ENCODE measurements at regions of chr1 and their contacts with region 1.

Region 1: DNA sequence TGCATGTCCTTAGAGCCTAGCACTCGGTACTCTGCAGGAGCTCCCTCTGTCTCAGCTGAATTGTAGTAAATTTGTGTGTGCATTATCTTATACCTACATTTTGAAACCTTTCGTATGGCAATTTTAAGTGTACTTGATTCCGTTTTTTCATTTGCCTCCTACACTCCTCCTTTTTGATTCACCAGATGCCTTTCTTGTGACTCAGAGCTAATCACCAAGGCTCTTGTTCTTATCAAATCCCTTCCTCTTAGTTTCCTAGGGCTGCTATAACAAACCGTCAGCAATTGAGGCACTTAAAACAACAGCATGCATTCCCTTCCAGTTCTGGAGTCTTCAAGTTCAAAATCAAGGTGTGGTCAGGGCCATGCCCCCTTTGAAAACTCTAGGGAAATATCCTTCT is 261.0 kb downstream of the ASTN1 start:
- DNase-seq: no peak
- ATAC-seq: peak in 1 of 4 donors; percentile 38
- H3K4me3 ChIP-seq: no peak overlapping the region
- H3K27ac ChIP-seq: no peak overlapping the region
- H3K4me1 ChIP-seq: peaks cover 0 to 16% (median 2%) of the 10 kb centered on the region in 12 donors
- H3K27me3 ChIP-seq: peaks cover 0 to 30% (median 0%) of the 10 kb centered on the region in 9 donors
- CTCF ChIP-seq: no peak
- POLR2A ChIP-seq: no peak

Region 2: GRCh38 chr1:176954242-176954641 is 50.8 kb after region 1 on chr1:
- intact Hi-C with region 1: loop called in 3 of 10 experiments (anchors 5 kb)
- DNase-seq: no peak
- ATAC-seq: no peak
- H3K4me3 ChIP-seq: no peak overlapping the region
- H3K27ac ChIP-seq: no peak overlapping the region
- H3K4me1 ChIP-seq: no peaks in the 10 kb centered on the region
- H3K27me3 ChIP-seq: no peaks in the 10 kb centered on the region
- CTCF ChIP-seq: peak in 3 of 12 donors; percentile 20 to 22 (median 21)
- POLR2A ChIP-seq: no peak

Region 3: GRCh38 chr1:177170756-177171535 is 267.5 kb after region 1 on chr1 and contains the start of gene BRINP2:
- intact Hi-C with region 1: loop called in 2 of 10 experiments (anchors 2 to 5 kb)
- DNase-seq: peak; percentile 30 to 68 (median 56)
- ATAC-seq: peak; percentile 78 to 98 (median 92)
- H3K4me3 ChIP-seq: peak within 1 kb of the TSS; percentile 16 to 58 (median 48)
- H3K27ac ChIP-seq: no peak within 1 kb of the TSS
- H3K4me1 ChIP-seq: peaks cover 0 to 10% (median 0%) of the 10 kb centered on the region in 12 donors
- H3K27me3 ChIP-seq: peaks cover 0 to 70% (median 38%) of the 10 kb centered on the region in 9 donors
- CTCF ChIP-seq: no peak
- POLR2A ChIP-seq: no peak
- total RNA-seq, gene BRINP2: 0.11 to 1.2 (median 0.22) TPM

Region 4: DNA sequence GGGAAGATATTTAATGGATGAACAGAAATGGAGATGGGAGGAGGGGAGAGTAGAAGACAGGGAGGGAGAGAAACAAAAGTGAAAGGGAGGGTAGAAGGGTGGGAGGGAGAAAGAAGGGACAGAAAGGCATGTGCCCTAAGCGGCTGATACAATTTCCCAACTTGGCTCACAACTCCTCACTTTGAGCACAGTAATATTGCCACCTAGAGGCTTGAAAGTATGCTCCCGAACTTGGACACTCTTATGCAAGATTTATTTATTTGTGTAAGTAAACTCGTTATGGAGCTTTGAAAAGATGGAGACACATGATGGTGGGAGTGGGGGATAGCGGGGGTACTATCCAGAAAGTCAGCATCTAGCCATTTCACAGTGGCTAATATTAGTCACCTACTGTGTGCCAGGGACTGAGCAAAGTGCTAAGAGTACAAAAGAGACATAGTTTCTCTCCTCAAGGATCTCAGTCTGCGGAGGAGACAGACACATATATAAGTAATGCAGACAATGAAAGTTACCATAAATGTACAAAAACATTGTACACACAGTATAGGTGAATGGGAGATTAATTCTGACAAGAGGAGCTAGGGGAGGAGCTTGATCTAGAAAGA is 876.7 kb after region 1 on chr1:
- intact Hi-C with region 1: loop called in 9 of 10 experiments (anchors 5 to 10 kb)
- DNase-seq: no peak
- ATAC-seq: peak in 3 of 4 donors; percentile 56 to 64 (median 62)
- H3K4me3 ChIP-seq: no peak overlapping the region
- H3K27ac ChIP-seq: no peak overlapping the region
- H3K4me1 ChIP-seq: no peaks in the 10 kb centered on the region
- H3K27me3 ChIP-seq: peaks cover 0 to 14% (median 0%) of the 10 kb centered on the region in 9 donors
- CTCF ChIP-seq: peak; percentile 22 to 65 (median 44)
- POLR2A ChIP-seq: no peak